ENCODE measurements at regions of chr2 and their contacts with region 1.

Region 1: GRCh38 chr2:131105156-131105949 is at the start of gene PLEKHB2:
- DNase-seq: peak; percentile 86 to 97 (median 93)
- ATAC-seq: peak; percentile 61
- H3K4me3 ChIP-seq: peak within 1 kb of the TSS; percentile 83 to 95
- H3K4me3 Mint-ChIP-seq: peak within 1 kb of the TSS; percentile 95
- H3K27ac ChIP-seq: peak within 1 kb of the TSS; percentile 91 to 95
- H3K27ac Mint-ChIP-seq: peak within 1 kb of the TSS; percentile 96
- H3K4me1 ChIP-seq: peaks cover 35% of the 10 kb centered on the region
- H3K4me1 Mint-ChIP-seq: peaks cover 58% of the 10 kb centered on the region
- H3K27me3 ChIP-seq: no peaks in the 10 kb centered on the region
- H3K27me3 Mint-ChIP-seq: no peaks in the 10 kb centered on the region
- CTCF ChIP-seq: no peak
- total RNA-seq, gene PLEKHB2: 89.8 to 90.1 TPM

Region 2: GRCh38 chr2:130181325-130181879 is 924.0 kb before region 1 on chr2 and contains the start of gene SMPD4:
- CTCF ChIA-PET with region 1: no interaction called
- POLR2A ChIA-PET with region 1: no interaction called
- intact Hi-C with region 1: loop called (anchors 2 to 5 kb)
- DNase-seq: peak; percentile 96 to 99 (median 98)
- ATAC-seq: peak; percentile 78
- H3K4me3 ChIP-seq: peak within 1 kb of the TSS; percentile 63 to 86
- H3K4me3 Mint-ChIP-seq: peak within 1 kb of the TSS; percentile 92
- H3K27ac ChIP-seq: peak within 1 kb of the TSS; percentile 81 to 89
- H3K27ac Mint-ChIP-seq: peak within 1 kb of the TSS; percentile 95
- H3K4me1 ChIP-seq: peaks cover 22% of the 10 kb centered on the region
- H3K4me1 Mint-ChIP-seq: peaks cover 27% of the 10 kb centered on the region
- H3K27me3 ChIP-seq: no peaks in the 10 kb centered on the region
- H3K27me3 Mint-ChIP-seq: no peaks in the 10 kb centered on the region
- CTCF ChIP-seq: no peak
- total RNA-seq, gene SMPD4: 108 to 114 TPM

Region 3: GRCh38 chr2:130727286-130728018 is 377.9 kb before region 1 on chr2:
- CTCF ChIA-PET with region 1: no interaction called
- POLR2A ChIA-PET with region 1: no interaction called
- intact Hi-C with region 1: loop called in 1 of 2 experiments (anchors 10 kb)
- DNase-seq: peak; percentile 81 to 94 (median 89)
- ATAC-seq: peak; percentile 96
- H3K4me3 ChIP-seq: peak overlapping the region; percentile 72 to 81
- H3K4me3 Mint-ChIP-seq: peak overlapping the region; percentile 84
- H3K27ac ChIP-seq: peak overlapping the region; percentile 66 to 85
- H3K27ac Mint-ChIP-seq: peak overlapping the region; percentile 81
- H3K4me1 ChIP-seq: peaks cover 16% of the 10 kb centered on the region
- H3K4me1 Mint-ChIP-seq: peaks cover 15% of the 10 kb centered on the region
- H3K27me3 ChIP-seq: no peaks in the 10 kb centered on the region
- H3K27me3 Mint-ChIP-seq: no peaks in the 10 kb centered on the region
- CTCF ChIP-seq: no peak

Region 4: GRCh38 chr2:130864830-130865800 is 240.2 kb before region 1 on chr2:
- CTCF ChIA-PET with region 1: no interaction called
- POLR2A ChIA-PET with region 1: no interaction called
- intact Hi-C with region 1: no loop called
- DNase-seq: peak in 2 of 9 experiments; percentile 28 to 29
- ATAC-seq: peak; percentile 73
- H3K4me3 ChIP-seq: no peak overlapping the region
- H3K4me3 Mint-ChIP-seq: no peak overlapping the region
- H3K27ac ChIP-seq: no peak overlapping the region
- H3K27ac Mint-ChIP-seq: no peak overlapping the region
- H3K4me1 ChIP-seq: no peaks in the 10 kb centered on the region
- H3K4me1 Mint-ChIP-seq: no peaks in the 10 kb centered on the region
- H3K27me3 ChIP-seq: no peaks in the 10 kb centered on the region
- H3K27me3 Mint-ChIP-seq: peaks cover 6% of the 10 kb centered on the region
- CTCF ChIP-seq: no peak

Region 5: GRCh38 chr2:131034122-131035051 is 71.0 kb before region 1 on chr2:
- CTCF ChIA-PET with region 1: no interaction called
- POLR2A ChIA-PET with region 1: interaction called, 3 read pairs
- intact Hi-C with region 1: loop called in 1 of 2 experiments (anchors 2 kb)
- DNase-seq: peak in 5 of 9 experiments; percentile 26 to 56 (median 44)
- ATAC-seq: peak; percentile 73
- H3K4me3 ChIP-seq: peak overlapping the region; percentile 27 to 63
- H3K4me3 Mint-ChIP-seq: peak overlapping the region; percentile 79
- H3K27ac ChIP-seq: no peak overlapping the region
- H3K27ac Mint-ChIP-seq: no peak overlapping the region
- H3K4me1 ChIP-seq: peaks cover 34% of the 10 kb centered on the region
- H3K4me1 Mint-ChIP-seq: peaks cover 46% of the 10 kb centered on the region
- H3K27me3 ChIP-seq: no peaks in the 10 kb centered on the region
- H3K27me3 Mint-ChIP-seq: peaks cover 3% of the 10 kb centered on the region
- CTCF ChIP-seq: no peak

Region 6: DNA sequence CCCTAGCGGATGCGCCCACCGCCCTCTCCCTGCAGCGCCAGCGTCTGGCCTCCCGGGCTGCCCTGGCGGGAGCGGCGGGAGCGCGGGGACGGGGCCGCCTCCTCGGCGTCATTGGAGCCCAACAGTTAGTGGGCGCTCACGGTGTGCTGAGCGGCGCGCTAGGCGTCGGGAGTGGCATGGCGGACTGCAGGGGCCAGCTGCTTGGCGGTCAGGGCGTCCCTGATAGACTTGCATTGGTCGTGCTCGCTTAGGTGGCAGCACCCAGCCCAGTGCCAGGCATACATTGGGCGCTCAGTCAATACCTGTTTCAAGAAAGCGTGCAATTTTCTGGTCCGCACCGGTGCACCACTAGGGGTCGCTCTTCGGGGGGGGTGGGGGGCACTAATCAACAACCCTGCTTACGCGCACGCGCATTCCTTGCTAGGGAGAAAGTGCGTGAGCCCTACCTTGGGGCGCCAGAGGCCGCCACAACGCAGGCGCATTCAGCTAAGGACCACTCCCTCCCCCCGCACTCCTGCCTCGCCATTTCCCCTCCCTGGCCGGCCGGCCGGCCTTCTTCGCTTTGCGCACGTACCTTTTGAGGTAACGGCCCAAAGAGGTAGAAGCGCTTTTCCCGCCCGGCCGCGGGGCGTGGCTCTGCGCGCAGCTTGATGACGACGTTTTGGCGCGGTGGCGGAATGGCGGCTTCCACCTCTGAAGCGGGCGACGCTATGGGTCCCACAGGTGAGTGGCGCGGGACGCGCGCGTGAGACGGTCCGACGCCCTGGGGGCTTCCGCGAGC is 387.3 kb after region 1 on chr2:
- CTCF ChIA-PET with region 1: no interaction called
- POLR2A ChIA-PET with region 1: interaction called, 6 read pairs
- intact Hi-C with region 1: loop called in 1 of 2 experiments (anchors 5 kb)
- DNase-seq: peak; percentile 86 to 98 (median 93)
- ATAC-seq: peak; percentile 73
- H3K4me3 ChIP-seq: peak overlapping the region; percentile 86 to 87
- H3K4me3 Mint-ChIP-seq: peak overlapping the region; percentile 95
- H3K27ac ChIP-seq: peak overlapping the region; percentile 95 to 97
- H3K27ac Mint-ChIP-seq: peak overlapping the region; percentile 98
- H3K4me1 ChIP-seq: peaks cover 19% of the 10 kb centered on the region
- H3K4me1 Mint-ChIP-seq: peaks cover 49% of the 10 kb centered on the region
- H3K27me3 ChIP-seq: no peaks in the 10 kb centered on the region
- H3K27me3 Mint-ChIP-seq: no peaks in the 10 kb centered on the region
- CTCF ChIP-seq: peak; percentile 88

Measured in CD8-positive, alpha-beta T cell (primary cell).